Activated CD4-positive, alpha-beta T cell treated with anti-CD3 and anti-CD28 coated beads for 36 hours (primary cell): ENCODE measurements at regions of chr3 and their contacts with region 1.

Region 1: GRCh38 chr3:23888617-23889228 is 28.1 kb downstream of the NKIRAS1 start:
- DNase-seq: no peak
- ATAC-seq: no peak
- H3K4me3 Mint-ChIP-seq: no peak overlapping the region
- H3K27ac Mint-ChIP-seq: no peak overlapping the region
- H3K4me1 Mint-ChIP-seq: no peaks in the 10 kb centered on the region
- H3K27me3 Mint-ChIP-seq: no peaks in the 10 kb centered on the region

Region 2: GRCh38 chr3:23834082-23834870 is 54.4 kb before region 1 on chr3:
- CTCF ChIA-PET with region 1: interaction called, 15 read pairs
- POLR2A ChIA-PET with region 1: no interaction called
- intact Hi-C with region 1: no loop called
- DNase-seq: no peak
- ATAC-seq: no peak
- H3K4me3 Mint-ChIP-seq: no peak overlapping the region
- H3K27ac Mint-ChIP-seq: no peak overlapping the region
- H3K4me1 Mint-ChIP-seq: peaks cover 49% of the 10 kb centered on the region
- H3K27me3 Mint-ChIP-seq: no peaks in the 10 kb centered on the region

Region 3: DNA sequence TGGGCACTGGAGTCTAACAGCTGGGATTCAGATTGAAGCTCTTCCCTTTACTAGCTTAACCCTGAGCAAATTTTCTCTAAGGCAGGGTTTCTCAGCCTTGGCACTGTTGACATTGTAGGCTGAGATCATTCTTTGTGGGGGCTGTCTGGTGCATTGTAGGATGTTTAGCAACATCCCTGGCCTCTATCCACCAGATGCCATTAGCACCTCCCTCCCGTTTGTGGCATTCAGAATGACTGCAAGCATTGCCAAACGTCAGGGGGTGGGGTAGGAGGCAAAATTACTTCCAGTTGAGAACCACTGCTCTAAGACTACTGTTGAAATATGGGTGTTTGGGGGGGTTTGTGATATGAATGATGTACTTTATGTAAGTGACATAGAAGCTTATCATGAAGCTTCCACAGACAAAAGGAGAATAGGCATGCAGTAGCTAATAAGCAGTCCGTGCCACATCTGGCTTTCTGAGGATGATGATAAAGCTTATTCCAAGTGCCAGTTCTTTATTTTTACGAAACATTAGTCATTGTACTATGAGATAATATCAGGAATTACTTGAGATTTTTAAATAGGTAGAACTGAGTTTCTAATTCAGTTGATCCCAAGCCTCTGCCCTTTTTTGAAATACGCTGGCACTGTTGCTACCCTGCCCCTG is 11.3 kb before region 1 on chr3:
- CTCF ChIA-PET with region 1: interaction called, 14 read pairs
- POLR2A ChIA-PET with region 1: no interaction called
- intact Hi-C with region 1: no loop called
- DNase-seq: no peak
- ATAC-seq: no peak
- H3K4me3 Mint-ChIP-seq: no peak overlapping the region
- H3K27ac Mint-ChIP-seq: no peak overlapping the region
- H3K4me1 Mint-ChIP-seq: peaks cover 25% of the 10 kb centered on the region
- H3K27me3 Mint-ChIP-seq: no peaks in the 10 kb centered on the region

Region 4: DNA sequence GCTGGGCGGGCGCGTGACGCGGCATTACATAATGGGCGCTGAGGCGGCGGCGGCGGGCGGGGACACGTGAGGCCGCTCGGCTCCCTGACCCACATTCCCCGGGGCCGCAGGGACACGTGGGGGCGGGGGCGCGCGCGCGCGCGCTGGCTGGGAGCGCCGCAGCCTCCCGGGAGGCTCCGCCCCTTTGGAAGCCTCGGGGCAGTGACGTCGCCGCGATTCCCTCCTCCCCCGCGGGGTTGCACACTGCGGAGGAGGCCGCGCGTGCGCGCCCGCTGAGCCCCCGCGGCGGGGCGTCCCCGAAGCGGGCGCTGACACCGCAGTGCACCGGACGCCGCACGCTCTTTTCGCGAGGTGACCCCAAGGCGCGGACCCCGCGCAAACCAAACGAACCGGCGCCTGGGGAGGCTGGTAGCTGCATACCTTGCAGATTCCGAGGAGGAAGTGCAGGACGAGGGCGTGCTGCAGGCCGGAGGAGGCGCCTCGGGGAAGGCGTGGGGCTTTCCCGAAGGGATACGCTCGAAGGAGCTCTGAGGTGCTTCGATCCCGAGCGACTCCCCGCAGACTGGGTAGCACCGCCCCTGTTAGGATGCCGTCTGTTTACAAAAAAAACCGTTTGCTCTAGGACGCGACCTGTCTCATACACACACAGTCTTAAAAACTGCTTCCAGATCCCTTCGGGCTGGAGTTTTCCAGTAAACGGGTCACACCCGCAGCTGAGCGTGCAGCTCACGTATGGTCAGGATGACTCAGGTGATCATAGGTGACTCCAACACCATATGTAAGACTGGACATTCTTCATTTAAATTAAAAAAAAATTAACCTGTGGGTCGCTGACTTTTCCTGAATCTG is 57.4 kb after region 1 on chr3:
- CTCF ChIA-PET with region 1: no interaction called
- POLR2A ChIA-PET with region 1: no interaction called
- intact Hi-C with region 1: no loop called
- DNase-seq: peak; percentile 98
- ATAC-seq: peak; percentile 76
- H3K4me3 Mint-ChIP-seq: peak overlapping the region; percentile 80
- H3K27ac Mint-ChIP-seq: peak overlapping the region; percentile 93
- H3K4me1 Mint-ChIP-seq: peaks cover 43% of the 10 kb centered on the region
- H3K27me3 Mint-ChIP-seq: peaks cover 10% of the 10 kb centered on the region